GM10248 (cell line): ENCODE measurements at regions of chr16 and their contacts with region 1.

Region 1: DNA sequence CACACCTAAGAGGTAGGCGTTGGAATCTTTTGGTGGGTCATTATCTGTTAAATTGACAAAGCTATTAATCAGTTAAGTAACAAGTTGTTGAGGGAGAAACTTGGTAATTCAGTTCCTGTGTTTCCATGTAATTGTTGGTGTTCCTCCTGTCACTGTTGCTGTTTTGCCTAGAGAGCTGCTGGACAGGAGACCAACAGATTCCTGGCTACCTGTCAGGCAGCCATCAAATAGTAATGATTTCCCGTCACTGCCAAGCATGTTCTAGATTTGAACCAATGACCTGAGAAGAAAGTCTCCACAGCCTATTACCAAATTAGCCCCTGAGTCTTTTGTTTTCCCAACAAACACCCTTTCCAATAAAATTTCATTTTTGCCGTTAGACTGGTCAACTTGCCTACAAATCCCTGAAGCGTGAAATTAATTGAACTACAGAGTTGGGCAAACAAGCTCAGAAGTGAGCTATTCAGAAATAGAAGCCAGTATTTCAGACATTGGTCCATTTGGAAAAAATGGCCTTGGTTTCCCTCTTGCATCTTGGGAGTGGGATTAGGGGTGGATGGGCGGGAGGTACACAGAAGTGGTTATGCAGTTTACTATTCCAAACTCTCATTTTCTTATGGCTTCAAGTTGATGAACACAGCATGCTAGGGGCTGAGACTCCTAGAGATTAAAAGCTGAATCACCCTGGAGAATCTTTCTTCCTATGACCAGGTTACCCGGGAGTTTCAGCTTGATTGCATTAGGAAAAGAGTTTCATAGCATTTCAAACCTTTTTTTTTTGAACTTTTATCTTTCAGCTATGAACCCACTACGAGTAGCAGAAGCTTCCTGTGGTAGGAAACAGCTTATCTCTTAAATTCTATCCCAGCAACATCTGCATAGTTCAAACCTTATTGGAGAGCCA is 262.8 kb upstream of the MAF start:
- DNase-seq: no peak
- CTCF ChIP-seq: no peak

Region 2: DNA sequence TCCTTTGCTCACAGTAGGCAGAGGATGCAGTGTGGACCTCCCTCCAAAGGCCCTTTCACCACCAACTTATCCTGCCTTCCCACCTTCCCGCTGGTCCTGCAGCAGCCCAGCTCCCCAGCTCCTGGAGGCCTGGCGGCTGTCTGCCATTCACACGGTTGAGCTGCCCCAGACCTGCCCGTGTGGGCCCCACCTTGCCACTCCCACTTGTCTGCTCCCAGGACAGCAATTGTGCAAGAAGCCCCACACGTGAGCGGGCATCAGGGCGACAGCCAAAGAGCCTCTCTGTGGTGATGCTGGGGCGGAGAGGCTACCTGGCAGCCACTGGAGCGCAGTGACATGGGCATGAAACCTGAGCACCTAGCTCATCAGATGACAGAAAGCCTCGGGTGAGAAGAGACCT is 14.3 kb before region 1 on chr16:
- CTCF ChIA-PET with region 1: interaction called, 10 read pairs
- POLR2A ChIA-PET with region 1: no interaction called
- DNase-seq: no peak
- CTCF ChIP-seq: no peak